ENCODE measurements at regions of chr7 and their contacts with region 1.

Region 1: DNA sequence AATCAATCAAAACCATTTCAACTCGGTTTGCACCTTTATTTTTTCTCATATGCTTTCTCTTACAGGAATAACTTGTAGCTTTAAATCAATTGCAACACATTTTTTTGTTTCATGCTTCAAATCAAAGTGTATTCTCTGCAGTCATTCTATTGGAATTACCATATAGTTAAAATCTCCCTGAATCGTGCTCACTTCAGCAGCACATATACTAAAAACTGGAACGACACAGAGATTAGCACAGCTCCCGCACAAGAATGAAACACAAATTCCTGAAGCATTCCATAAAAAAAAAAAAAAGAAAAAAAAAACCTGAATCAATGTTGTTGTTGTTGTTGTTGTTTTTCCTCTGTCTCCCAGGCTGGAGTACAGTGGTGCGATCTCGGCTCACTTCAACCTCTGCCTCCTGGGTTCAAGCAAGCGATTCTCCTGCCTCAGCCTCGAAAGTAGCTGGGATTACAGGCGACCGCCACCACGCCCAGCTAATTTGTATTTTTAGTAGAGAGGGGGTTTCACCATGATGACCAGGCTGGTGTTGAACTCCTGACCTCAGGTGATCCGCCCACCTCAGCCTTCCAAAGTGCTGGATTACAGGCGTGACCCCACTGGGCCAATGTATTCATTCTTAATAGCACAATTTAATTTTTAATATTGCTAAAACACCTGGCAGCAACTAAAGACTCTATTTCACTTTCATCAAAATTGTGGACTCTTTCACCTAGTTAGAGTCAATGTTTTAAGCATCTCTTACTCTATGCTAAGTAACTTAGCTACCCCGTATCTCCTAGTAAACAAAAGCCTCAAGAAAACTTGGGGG is 26.3 kb downstream of the ANKRD61 start:
- DNase-seq: no peak
- ATAC-seq: no peak
- H3K4me3 ChIP-seq: peak overlapping the region in 2 of 5 experiments; percentile 18 to 90
- H3K4me3 Mint-ChIP-seq: peak overlapping the region; percentile 98
- H3K27ac ChIP-seq: peak overlapping the region in 1 of 2 donors; percentile 93
- H3K27ac Mint-ChIP-seq: peak overlapping the region; percentile 46
- H3K4me1 ChIP-seq: peaks cover 12 to 19% of the 10 kb centered on the region in 2 donors
- H3K4me1 Mint-ChIP-seq: peaks cover 20% of the 10 kb centered on the region
- H3K27me3 ChIP-seq: no peaks in the 10 kb centered on the region
- H3K27me3 Mint-ChIP-seq: no peaks in the 10 kb centered on the region
- CTCF ChIP-seq: no peak

Region 2: DNA sequence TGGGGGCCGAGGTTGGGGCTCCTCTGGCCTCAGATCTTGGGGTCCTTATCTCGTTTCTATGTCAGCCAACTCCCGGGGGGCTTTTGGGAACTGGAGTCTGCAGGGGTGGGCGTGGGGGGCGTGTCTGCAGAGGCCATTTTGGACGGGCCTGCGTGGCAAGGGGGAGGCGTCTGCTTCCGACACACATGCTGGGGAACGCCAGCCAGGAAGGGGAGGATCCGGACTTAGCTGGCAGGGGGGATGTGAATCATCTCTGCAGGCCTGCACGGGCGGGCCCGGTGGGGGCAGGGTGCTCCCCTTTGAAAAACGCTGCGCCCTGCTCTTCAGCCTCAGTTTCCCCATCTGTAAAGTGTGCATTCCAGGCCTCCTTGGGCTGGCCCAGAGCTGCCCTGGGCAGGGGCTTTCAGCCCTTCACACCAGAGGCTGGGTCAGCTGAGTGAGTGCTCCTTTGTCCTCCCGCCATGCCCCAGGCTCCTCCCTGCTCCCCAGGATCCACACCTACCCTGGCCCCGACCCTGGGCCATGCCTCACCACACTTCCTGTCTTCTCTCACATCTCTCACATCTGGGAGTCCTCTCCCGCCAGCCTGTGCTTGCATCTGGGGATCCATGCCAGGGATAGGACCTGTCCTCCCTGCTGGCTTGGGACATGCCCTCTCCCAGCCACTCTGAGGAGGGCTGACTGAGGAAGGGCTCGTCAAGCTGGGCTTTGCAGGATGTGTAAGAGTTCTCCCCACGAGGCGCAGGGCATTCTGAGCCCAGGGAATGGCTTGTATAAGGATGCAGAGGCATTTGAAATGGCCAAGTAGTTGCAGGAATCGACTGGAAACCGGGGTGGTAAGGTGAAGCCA is 461.3 kb before region 1 on chr7:
- CTCF ChIA-PET with region 1: no interaction called
- POLR2A ChIA-PET with region 1: no interaction called
- intact Hi-C with region 1: no loop called
- DNase-seq: peak; percentile 42
- ATAC-seq: peak; percentile 18
- H3K4me3 ChIP-seq: no peak overlapping the region
- H3K4me3 Mint-ChIP-seq: peak overlapping the region; percentile 57
- H3K27ac ChIP-seq: no peak overlapping the region
- H3K27ac Mint-ChIP-seq: no peak overlapping the region
- H3K4me1 ChIP-seq: peaks cover 49 to 56% of the 10 kb centered on the region in 2 donors
- H3K4me1 Mint-ChIP-seq: peaks cover 31% of the 10 kb centered on the region
- H3K27me3 ChIP-seq: peaks cover 0 to 48% (median 20%) of the 10 kb centered on the region in 4 experiments
- H3K27me3 Mint-ChIP-seq: peaks cover 17% of the 10 kb centered on the region
- CTCF ChIP-seq: no peak

Region 3: DNA sequence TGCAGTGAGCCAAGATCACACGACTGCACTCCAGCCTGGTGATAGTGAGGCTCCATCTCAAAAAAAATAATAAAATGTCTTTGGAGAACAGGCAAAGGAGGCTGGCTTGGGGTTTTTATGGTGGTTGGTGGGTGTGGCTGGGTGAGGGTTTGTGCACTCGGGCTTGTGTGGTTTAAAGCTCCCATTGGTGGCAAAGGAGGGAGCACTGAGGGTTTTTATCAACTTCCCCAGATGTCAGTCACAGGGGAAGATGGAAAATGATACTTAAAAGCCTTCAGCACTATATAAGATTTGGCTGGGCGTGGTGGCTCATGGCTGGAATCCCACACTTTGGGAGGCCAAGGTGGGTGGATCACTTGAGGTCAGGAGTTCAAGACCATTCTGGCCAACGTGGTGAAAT is 259.8 kb before region 1 on chr7:
- CTCF ChIA-PET with region 1: no interaction called
- POLR2A ChIA-PET with region 1: no interaction called
- intact Hi-C with region 1: no loop called
- DNase-seq: no peak
- ATAC-seq: no peak
- H3K4me3 ChIP-seq: no peak overlapping the region
- H3K4me3 Mint-ChIP-seq: no peak overlapping the region
- H3K27ac ChIP-seq: no peak overlapping the region
- H3K27ac Mint-ChIP-seq: no peak overlapping the region
- H3K4me1 ChIP-seq: no peaks in the 10 kb centered on the region
- H3K4me1 Mint-ChIP-seq: no peaks in the 10 kb centered on the region
- H3K27me3 ChIP-seq: no peaks in the 10 kb centered on the region
- H3K27me3 Mint-ChIP-seq: peaks cover 2% of the 10 kb centered on the region
- CTCF ChIP-seq: no peak

Region 4: DNA sequence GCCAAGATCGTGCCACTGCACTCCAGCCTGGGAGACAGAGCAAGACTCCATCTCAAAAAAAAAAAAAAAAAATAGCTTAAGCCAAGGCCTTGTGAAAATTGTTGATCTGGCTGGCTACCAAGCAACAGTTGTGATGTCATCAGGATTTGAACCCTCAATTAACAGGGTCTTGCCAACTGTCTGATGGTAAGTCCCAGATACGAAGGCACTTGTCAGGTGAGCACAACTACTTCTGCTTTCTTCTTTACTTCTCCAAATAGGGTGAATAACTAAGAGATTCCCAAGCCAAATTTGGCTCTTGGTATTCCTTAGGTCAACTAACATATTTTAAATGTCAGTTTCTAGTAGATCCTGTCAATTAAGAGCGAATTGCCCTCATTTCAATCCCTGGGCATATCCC is 21.0 kb after region 1 on chr7:
- CTCF ChIA-PET with region 1: no interaction called
- POLR2A ChIA-PET with region 1: interaction called, 11 read pairs
- intact Hi-C with region 1: no loop called
- DNase-seq: peak; percentile 80
- ATAC-seq: no peak
- H3K4me3 ChIP-seq: no peak overlapping the region
- H3K4me3 Mint-ChIP-seq: no peak overlapping the region
- H3K27ac ChIP-seq: peak overlapping the region in 1 of 2 donors; percentile 70
- H3K27ac Mint-ChIP-seq: peak overlapping the region; percentile 66
- H3K4me1 ChIP-seq: peaks cover 0 to 9% of the 10 kb centered on the region in 2 donors
- H3K4me1 Mint-ChIP-seq: peaks cover 17% of the 10 kb centered on the region
- H3K27me3 ChIP-seq: no peaks in the 10 kb centered on the region
- H3K27me3 Mint-ChIP-seq: no peaks in the 10 kb centered on the region
- CTCF ChIP-seq: no peak

Region 5: GRCh38 chr7:6250364-6250833 is 192.9 kb after region 1 on chr7:
- CTCF ChIA-PET with region 1: no interaction called
- POLR2A ChIA-PET with region 1: no interaction called
- intact Hi-C with region 1: no loop called
- DNase-seq: no peak
- ATAC-seq: no peak
- H3K4me3 ChIP-seq: no peak overlapping the region
- H3K4me3 Mint-ChIP-seq: no peak overlapping the region
- H3K27ac ChIP-seq: no peak overlapping the region
- H3K27ac Mint-ChIP-seq: no peak overlapping the region
- H3K4me1 ChIP-seq: peaks cover 0 to 5% of the 10 kb centered on the region in 2 donors
- H3K4me1 Mint-ChIP-seq: peaks cover 2% of the 10 kb centered on the region
- H3K27me3 ChIP-seq: no peaks in the 10 kb centered on the region
- H3K27me3 Mint-ChIP-seq: peaks cover 11% of the 10 kb centered on the region
- CTCF ChIP-seq: no peak

Region 6: DNA sequence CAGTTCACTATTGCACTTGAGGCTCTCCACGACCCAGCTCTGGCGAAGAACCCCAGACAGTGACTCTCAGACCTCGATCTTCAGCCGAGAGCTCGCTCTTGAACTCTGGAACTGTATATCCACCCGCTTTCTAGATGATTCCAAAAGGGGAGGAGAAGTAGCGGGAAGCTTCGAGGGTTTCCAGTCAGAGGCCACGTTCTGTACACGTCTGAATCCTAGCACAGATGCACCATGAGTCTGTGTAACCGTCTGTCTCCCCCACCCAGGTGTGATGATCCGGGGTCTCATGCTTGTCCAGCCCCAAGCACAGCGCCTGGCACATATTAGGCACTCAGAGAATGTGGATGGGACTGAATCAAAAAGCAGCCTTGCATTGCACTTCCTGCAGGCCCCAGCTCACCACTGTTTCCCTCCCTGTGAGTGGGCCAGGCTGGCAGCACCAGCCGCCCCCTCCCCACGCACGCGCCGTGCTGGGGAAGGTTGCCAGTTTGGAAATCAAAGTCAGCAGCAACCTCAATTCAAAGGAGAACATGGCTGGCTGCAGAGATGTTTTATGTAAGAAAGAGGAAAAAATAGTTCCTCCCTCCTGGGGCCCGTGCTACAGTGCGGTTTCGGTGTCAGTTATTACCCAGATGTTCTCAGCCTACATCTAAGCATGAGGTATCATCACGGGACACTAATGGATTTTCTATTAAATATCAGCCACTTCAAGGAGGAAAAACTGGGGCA is 488.0 kb after region 1 on chr7:
- CTCF ChIA-PET with region 1: no interaction called
- POLR2A ChIA-PET with region 1: no interaction called
- intact Hi-C with region 1: no loop called
- DNase-seq: no peak
- ATAC-seq: no peak
- H3K4me3 ChIP-seq: no peak overlapping the region
- H3K4me3 Mint-ChIP-seq: no peak overlapping the region
- H3K27ac ChIP-seq: no peak overlapping the region
- H3K27ac Mint-ChIP-seq: no peak overlapping the region
- H3K4me1 ChIP-seq: peaks cover 5 to 14% of the 10 kb centered on the region in 2 donors
- H3K4me1 Mint-ChIP-seq: peaks cover 12% of the 10 kb centered on the region
- H3K27me3 ChIP-seq: no peaks in the 10 kb centered on the region
- H3K27me3 Mint-ChIP-seq: peaks cover 8% of the 10 kb centered on the region
- CTCF ChIP-seq: no peak

Measured in B cell (primary cell).